Right lobe of liver (tissue), 6 donors: ENCODE measurements at regions of chr17 and their contacts with region 1.

Region 1: GRCh38 chr17:1783834-1784611 is 22.2 kb downstream of the SERPINF1 start:
- DNase-seq: peak; percentile 67 to 74 (median 73)
- ATAC-seq: peak; percentile 71 to 80 (median 78)
- H3K4me3 ChIP-seq: no peak overlapping the region
- H3K27ac ChIP-seq: peak overlapping the region; percentile 73 to 88 (median 88)
- H3K4me1 ChIP-seq: peaks cover 4 to 13% (median 7%) of the 10 kb centered on the region in 4 donors
- H3K27me3 ChIP-seq: no peaks in the 10 kb centered on the region
- CTCF ChIP-seq: peak; percentile 68 to 81 (median 72)
- POLR2A ChIP-seq: peak; percentile 74

Region 2: GRCh38 chr17:1661045-1661444 is 123.0 kb before region 1 on chr17:
- intact Hi-C with region 1: loop called in 1 of 2 experiments (anchors 10 kb)
- DNase-seq: no peak
- ATAC-seq: no peak
- H3K4me3 ChIP-seq: no peak overlapping the region
- H3K27ac ChIP-seq: no peak overlapping the region
- H3K4me1 ChIP-seq: no peaks in the 10 kb centered on the region
- H3K27me3 ChIP-seq: no peaks in the 10 kb centered on the region
- CTCF ChIP-seq: no peak
- POLR2A ChIP-seq: no peak

Region 3: DNA sequence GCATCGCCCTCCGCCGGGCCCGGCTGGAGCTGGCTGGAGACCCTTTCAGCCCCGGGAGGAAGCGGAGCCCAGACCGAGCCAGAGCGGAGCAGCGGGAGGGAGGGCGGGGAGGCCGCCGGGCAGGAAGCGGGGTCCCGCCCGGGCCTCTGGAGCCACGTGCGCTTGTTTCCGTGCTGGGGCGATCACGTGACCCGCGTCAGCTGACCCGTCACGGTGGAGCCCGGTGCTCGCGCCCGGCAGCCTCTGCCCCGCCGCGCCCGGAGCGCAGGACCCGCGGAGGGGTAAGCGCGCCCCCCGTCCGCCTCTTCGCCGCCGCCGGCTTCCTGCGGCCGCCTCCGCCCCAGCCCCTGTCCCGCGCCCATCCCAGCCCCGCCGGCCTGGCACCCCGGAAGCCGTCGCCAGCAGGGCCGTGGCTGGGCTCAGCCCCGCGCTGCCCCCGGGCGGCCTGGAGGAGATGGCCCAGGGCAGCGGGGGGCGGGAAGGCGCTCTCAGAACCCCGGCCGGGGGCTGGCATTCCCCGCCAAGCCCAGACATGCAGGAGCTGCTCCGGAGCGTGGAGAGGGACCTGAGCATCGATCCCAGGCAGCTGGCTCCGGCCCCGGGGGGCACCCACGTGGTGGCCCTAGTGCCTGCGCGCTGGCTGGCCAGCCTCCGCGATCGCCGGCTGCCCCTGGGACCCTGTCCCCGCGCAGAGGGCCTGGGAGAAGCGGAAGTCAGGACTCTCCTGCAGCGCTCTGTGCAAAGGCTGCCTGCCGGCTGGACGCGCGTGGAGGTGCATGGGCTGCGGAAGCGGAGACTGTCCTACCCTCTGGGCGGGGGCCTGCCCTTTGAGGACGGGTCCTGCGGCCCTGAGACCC is 59.3 kb before region 1 on chr17 and contains the start of gene WDR81:
- intact Hi-C with region 1: loop called in 1 of 2 experiments (anchors 5 kb)
- DNase-seq: peak; percentile 94 to 96 (median 94)
- ATAC-seq: peak; percentile 72 to 85 (median 79)
- H3K4me3 ChIP-seq: peak within 1 kb of the TSS; percentile 75 to 90 (median 82)
- H3K27ac ChIP-seq: peak within 1 kb of the TSS; percentile 66 to 85 (median 74)
- H3K4me1 ChIP-seq: peaks cover 0 to 39% (median 14%) of the 10 kb centered on the region in 4 donors
- H3K27me3 ChIP-seq: no peaks in the 10 kb centered on the region
- CTCF ChIP-seq: peak in 1 of 4 donors; percentile 24
- POLR2A ChIP-seq: peak; percentile 35
- total RNA-seq, gene WDR81: 23.0 to 27.2 (median 23.9) TPM

Region 4: GRCh38 chr17:1852327-1852726 is 68.3 kb after region 1 on chr17:
- intact Hi-C with region 1: no loop called
- DNase-seq: peak; percentile 44 to 76 (median 67)
- ATAC-seq: peak; percentile 79 to 95 (median 94)
- H3K4me3 ChIP-seq: no peak overlapping the region
- H3K27ac ChIP-seq: no peak overlapping the region
- H3K4me1 ChIP-seq: peaks cover 0 to 8% (median 0%) of the 10 kb centered on the region in 4 donors
- H3K27me3 ChIP-seq: no peaks in the 10 kb centered on the region
- CTCF ChIP-seq: no peak
- POLR2A ChIP-seq: no peak